Left ventricle myocardium inferior (tissue), 1 donor: ENCODE measurements at regions of chr11 and their contacts with region 1.

Region 1: DNA sequence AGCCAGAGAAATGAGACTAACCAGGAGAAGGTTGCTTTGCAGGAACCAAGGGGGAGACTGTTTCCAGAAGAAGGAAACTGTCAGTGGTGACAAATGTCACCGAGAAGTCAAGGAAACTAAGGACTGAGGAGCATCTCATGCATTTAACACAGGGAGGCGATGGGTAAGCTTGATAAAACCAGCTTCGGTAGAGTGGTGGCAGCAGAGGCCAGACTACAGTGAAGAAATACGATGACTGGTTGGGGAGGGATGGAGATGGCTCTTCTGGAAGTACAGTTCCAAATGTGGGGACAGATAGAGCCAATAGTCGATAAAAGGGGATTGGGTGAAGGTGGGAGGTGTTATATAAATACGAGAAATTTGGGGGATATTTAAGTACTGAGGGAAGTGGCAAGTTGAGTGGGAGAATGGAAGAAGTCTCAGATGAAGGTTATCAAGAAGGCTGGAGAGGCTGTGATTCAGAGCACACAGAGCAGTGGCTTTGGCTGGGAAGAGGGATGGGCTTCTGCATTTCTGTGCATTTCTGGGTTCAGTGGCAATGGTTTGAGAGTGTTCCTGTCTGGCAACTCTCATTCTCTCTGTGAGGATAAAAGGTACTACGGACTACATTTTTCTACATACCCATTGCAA is 29.2 kb downstream of the SC5D start:
- DNase-seq: no peak
- H3K4me3 ChIP-seq: no peak overlapping the region
- H3K27ac ChIP-seq: no peak overlapping the region
- H3K4me1 ChIP-seq: no peaks in the 10 kb centered on the region
- H3K27me3 ChIP-seq: peaks cover 29% of the 10 kb centered on the region
- CTCF ChIP-seq: peak; percentile 64

Region 2: GRCh38 chr11:121367001-121367843 is 45.5 kb after region 1 on chr11:
- intact Hi-C with region 1: no loop called
- DNase-seq: no peak
- H3K4me3 ChIP-seq: peak overlapping the region; percentile 5
- H3K27ac ChIP-seq: no peak overlapping the region
- H3K4me1 ChIP-seq: peaks cover 17% of the 10 kb centered on the region
- H3K27me3 ChIP-seq: no peaks in the 10 kb centered on the region
- CTCF ChIP-seq: no peak

Region 3: GRCh38 chr11:121534131-121535093 is 212.7 kb after region 1 on chr11:
- intact Hi-C with region 1: loop called (anchors 5 kb)
- DNase-seq: no peak
- H3K4me3 ChIP-seq: no peak overlapping the region
- H3K27ac ChIP-seq: no peak overlapping the region
- H3K4me1 ChIP-seq: peaks cover 6% of the 10 kb centered on the region
- H3K27me3 ChIP-seq: no peaks in the 10 kb centered on the region
- CTCF ChIP-seq: peak; percentile 59

Region 4: GRCh38 chr11:121591405-121592033 is 269.8 kb after region 1 on chr11:
- intact Hi-C with region 1: loop called (anchors 5 kb)
- DNase-seq: no peak
- H3K4me3 ChIP-seq: no peak overlapping the region
- H3K27ac ChIP-seq: no peak overlapping the region
- H3K4me1 ChIP-seq: no peaks in the 10 kb centered on the region
- H3K27me3 ChIP-seq: no peaks in the 10 kb centered on the region
- CTCF ChIP-seq: peak; percentile 91